Activated CD8-positive, alpha-beta T cell treated with anti-CD3 and anti-CD28 coated beads, Interleukin-2, amount 10 ng/mL, durations not matched to agents 7 days and 5 days (primary cell): ENCODE measurements at regions of chr1 and their contacts with region 1.

Region 1: DNA sequence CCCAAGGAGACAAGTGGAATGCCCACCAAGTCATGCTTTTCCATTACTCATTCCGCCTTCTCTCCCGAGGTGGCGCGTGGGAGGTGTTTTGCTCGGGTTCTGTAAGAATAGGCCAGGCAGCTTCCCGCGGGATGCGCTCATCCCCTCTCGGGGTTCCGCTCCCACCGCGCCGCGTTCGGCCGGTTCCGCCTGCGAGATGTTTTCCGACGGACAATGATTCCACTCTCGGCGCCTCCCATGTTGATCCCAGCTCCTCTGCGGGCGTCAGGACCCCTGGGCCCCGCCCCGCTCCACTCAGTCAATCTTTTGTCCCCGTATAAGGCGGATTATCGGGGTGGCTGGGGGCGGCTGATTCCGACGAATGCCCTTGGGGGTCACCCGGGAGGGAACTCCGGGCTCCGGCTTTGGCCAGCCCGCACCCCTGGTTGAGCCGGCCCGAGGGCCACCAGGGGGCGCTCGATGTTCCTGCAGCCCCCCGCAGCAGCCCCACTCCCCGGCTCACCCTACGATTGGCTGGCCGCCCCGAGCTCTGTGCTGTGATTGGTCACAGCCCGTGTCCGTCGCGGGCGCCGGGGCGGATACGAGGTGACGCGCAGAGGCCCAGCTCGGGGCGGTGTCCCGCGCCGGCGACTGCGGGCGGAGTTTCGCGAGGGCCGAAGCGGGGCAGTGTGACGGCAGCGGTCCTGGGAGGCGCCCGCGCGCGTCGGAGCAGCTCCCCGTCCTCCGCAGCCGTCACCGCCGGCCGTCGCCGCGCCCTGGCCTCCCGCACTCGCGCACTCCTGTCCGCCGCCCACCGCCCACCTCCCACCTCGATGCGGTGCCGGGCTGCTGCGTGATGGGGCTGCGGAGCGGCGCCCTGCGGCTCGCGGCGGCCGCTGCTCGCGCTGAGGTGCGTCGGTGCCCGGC is at the start of gene KIF1B:
- DNase-seq: peak; percentile 96
- ATAC-seq: peak; percentile 99
- H3K4me3 Mint-ChIP-seq: peak within 1 kb of the TSS; percentile 87
- H3K27ac Mint-ChIP-seq: peak within 1 kb of the TSS; percentile 74
- H3K4me1 Mint-ChIP-seq: peaks cover 27% of the 10 kb centered on the region
- H3K27me3 Mint-ChIP-seq: peaks cover 17% of the 10 kb centered on the region
- total RNA-seq, gene KIF1B: 9.2 to 9.6 TPM

Region 2: GRCh38 chr1:10057343-10057742 is 152.8 kb before region 1 on chr1:
- CTCF ChIA-PET with region 1: no interaction called
- POLR2A ChIA-PET with region 1: no interaction called
- DNase-seq: no peak
- ATAC-seq: no peak
- H3K4me3 Mint-ChIP-seq: no peak overlapping the region
- H3K27ac Mint-ChIP-seq: no peak overlapping the region
- H3K4me1 Mint-ChIP-seq: no peaks in the 10 kb centered on the region
- H3K27me3 Mint-ChIP-seq: no peaks in the 10 kb centered on the region

Region 3: DNA sequence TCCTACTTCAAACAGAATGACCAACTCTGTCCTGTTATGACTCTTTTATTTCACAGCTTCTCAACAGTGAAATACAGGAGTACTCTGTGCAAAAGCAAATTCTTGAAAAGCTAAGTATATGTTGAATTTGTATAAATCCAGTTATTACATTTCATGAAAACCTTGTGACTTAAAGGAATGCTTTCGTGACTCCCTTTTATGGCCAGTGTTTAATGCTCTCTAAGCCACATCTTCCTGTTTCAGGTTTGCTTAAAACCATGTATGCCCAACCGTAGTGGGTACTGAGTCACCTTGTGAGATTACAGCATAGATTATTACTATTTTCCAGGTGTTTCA is 40.0 kb before region 1 on chr1:
- CTCF ChIA-PET with region 1: interaction called, 22 read pairs
- POLR2A ChIA-PET with region 1: no interaction called
- DNase-seq: peak; percentile 52
- ATAC-seq: peak; percentile 84
- H3K4me3 Mint-ChIP-seq: peak overlapping the region; percentile 51
- H3K27ac Mint-ChIP-seq: peak overlapping the region; percentile 92
- H3K4me1 Mint-ChIP-seq: peaks cover 55% of the 10 kb centered on the region
- H3K27me3 Mint-ChIP-seq: no peaks in the 10 kb centered on the region

Region 4: DNA sequence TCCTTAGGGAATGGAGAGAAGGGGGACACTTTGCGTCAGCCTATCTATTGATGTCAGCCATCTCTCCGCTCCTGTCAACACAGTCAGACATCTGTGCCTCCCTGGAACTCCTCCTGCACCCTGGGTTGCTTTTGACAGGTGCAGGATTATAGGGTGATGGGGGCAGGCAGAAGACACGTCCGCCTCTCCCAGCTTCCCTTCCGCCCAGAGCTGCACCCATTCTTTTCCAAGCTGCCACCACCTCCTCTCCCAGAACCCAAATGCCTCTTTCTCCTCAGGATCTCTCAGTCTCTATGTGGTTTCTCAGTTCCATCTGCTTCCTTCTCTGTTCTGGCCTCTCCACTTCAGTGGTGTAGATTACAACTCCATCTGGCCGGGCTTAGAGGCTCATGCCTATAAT is 16.9 kb before region 1 on chr1:
- CTCF ChIA-PET with region 1: interaction called, 20 read pairs
- POLR2A ChIA-PET with region 1: no interaction called
- DNase-seq: no peak
- ATAC-seq: no peak
- H3K4me3 Mint-ChIP-seq: no peak overlapping the region
- H3K27ac Mint-ChIP-seq: no peak overlapping the region
- H3K4me1 Mint-ChIP-seq: peaks cover 9% of the 10 kb centered on the region
- H3K27me3 Mint-ChIP-seq: peaks cover 20% of the 10 kb centered on the region

Region 5: GRCh38 chr1:10328180-10328963 is 118.2 kb after region 1 on chr1:
- CTCF ChIA-PET with region 1: interaction called, 20 read pairs
- POLR2A ChIA-PET with region 1: no interaction called
- DNase-seq: no peak
- ATAC-seq: no peak
- H3K4me3 Mint-ChIP-seq: no peak overlapping the region
- H3K27ac Mint-ChIP-seq: no peak overlapping the region
- H3K4me1 Mint-ChIP-seq: peaks cover 2% of the 10 kb centered on the region
- H3K27me3 Mint-ChIP-seq: no peaks in the 10 kb centered on the region

Region 6: GRCh38 chr1:10398734-10399623 is 188.8 kb after region 1 on chr1 and contains the start of gene PGD:
- CTCF ChIA-PET with region 1: interaction called, 14 read pairs
- POLR2A ChIA-PET with region 1: interaction called, 4 read pairs
- DNase-seq: peak; percentile 99
- ATAC-seq: peak; percentile 98
- H3K4me3 Mint-ChIP-seq: peak within 1 kb of the TSS; percentile 81
- H3K27ac Mint-ChIP-seq: peak within 1 kb of the TSS; percentile 87
- H3K4me1 Mint-ChIP-seq: peaks cover 33% of the 10 kb centered on the region
- H3K27me3 Mint-ChIP-seq: no peaks in the 10 kb centered on the region
- total RNA-seq, gene PGD: 88.3 to 91.8 TPM